Calu3 (cell line): ENCODE measurements at regions of chr17 and their contacts with region 1.

Region 1: GRCh38 chr17:77054936-77055335 is 85.8 kb upstream of the SEC14L1 start:
- DNase-seq: no peak
- H3K4me3 Mint-ChIP-seq: no peak overlapping the region
- H3K27ac Mint-ChIP-seq: no peak overlapping the region
- H3K4me1 Mint-ChIP-seq: no peaks in the 10 kb centered on the region
- H3K27me3 Mint-ChIP-seq: peaks cover 68% of the 10 kb centered on the region
- CTCF ChIP-seq: no peak

Region 2: DNA sequence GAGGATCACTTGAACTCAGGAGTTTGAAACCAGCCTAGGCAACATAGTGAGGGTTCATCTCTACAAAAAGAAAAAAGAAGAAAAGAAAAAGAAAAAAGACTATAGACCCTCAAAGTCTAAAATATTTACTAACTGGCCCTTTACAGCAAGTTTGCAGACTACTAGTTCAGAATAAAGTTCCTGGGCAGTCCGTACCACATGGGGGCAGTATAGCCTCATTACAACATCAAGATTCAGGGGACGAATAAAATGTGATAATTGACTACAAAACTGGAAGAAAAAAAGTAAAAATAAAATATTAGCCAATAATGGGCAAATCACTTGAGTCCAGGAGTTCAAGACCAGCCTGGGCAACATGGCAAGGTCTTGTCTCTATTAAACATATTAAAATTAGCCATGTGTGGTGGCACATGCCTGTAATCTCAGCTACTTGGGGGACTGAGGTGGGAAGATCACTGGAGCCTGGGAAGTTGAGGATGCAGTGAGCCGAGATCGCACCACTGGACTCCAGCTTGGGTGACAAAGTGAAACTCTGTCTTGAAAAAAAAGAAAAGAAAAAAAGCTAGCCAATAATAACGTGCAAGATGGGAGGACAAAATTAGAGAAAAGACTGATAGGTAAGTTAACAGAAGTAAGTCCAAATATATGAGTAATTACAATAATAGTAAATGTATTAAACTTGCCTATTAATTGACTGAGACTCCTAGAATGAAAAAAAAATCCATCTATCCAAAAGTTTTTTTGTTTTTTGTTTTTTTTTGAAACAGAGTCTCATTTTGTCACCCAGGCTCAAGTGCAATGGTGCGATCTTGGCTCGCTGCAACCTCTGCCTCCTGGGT is 43.5 kb before region 1 on chr17:
- CTCF ChIA-PET with region 1: interaction called, 8 read pairs
- intact Hi-C with region 1: loop called (anchors 1 kb)
- DNase-seq: peak; percentile 61
- H3K4me3 Mint-ChIP-seq: no peak overlapping the region
- H3K27ac Mint-ChIP-seq: no peak overlapping the region
- H3K4me1 Mint-ChIP-seq: no peaks in the 10 kb centered on the region
- H3K27me3 Mint-ChIP-seq: peaks cover 66% of the 10 kb centered on the region
- CTCF ChIP-seq: peak; percentile 53